Brain microvascular endothelial cell (primary cell): ENCODE measurements at regions of chr7 and their contacts with region 1.

Region 1: GRCh38 chr7:47979145-47979831 is at the start of gene HUS1:
- DNase-seq: peak; percentile 76
- H3K4me3 ChIP-seq: peak within 1 kb of the TSS; percentile 81
- H3K27ac ChIP-seq: peak within 1 kb of the TSS; percentile 45
- H3K27me3 ChIP-seq: no peaks in the 10 kb centered on the region
- CTCF ChIP-seq: no peak

Region 2: GRCh38 chr7:48109848-48110663 is 130.8 kb after region 1 on chr7:
- in situ Hi-C with region 1: loop called (anchors 25 kb)
- DNase-seq: peak; percentile 44
- H3K4me3 ChIP-seq: no peak overlapping the region
- H3K27ac ChIP-seq: no peak overlapping the region
- H3K27me3 ChIP-seq: no peaks in the 10 kb centered on the region
- CTCF ChIP-seq: peak; percentile 100